CD8-positive, alpha-beta T cell (primary cell): ENCODE measurements at regions of chr5 and their contacts with region 1.

Region 1: DNA sequence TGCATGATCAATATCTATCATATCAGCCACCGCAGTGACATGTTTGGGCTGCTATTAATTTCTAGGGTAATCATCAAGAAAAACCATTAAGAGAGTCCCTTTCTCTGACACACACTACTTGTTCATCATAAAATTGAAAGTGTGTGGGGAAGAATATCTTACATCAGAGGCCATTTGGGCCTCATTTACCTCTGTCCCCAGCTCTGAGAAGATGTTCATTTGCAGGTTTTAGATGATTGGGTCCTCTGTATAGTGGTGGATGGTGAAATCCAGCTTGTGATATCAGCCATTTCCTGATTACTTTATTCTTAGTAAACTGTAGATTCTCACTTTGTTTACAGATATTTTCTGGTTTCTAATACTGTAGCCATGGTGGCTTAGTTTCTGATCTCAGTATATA is 29.8 kb upstream of the PJA2 start:
- DNase-seq: no peak
- ATAC-seq: no peak
- H3K4me3 ChIP-seq: no peak overlapping the region
- H3K4me3 Mint-ChIP-seq: no peak overlapping the region
- H3K27ac ChIP-seq: no peak overlapping the region
- H3K27ac Mint-ChIP-seq: no peak overlapping the region
- H3K4me1 ChIP-seq: no peaks in the 10 kb centered on the region
- H3K4me1 Mint-ChIP-seq: no peaks in the 10 kb centered on the region
- H3K27me3 ChIP-seq: no peaks in the 10 kb centered on the region
- H3K27me3 Mint-ChIP-seq: no peaks in the 10 kb centered on the region
- CTCF ChIP-seq: no peak

Region 2: GRCh38 chr5:108521841-108522506 is 917.6 kb before region 1 on chr5:
- CTCF ChIA-PET with region 1: no interaction called
- POLR2A ChIA-PET with region 1: no interaction called
- intact Hi-C with region 1: loop called in 1 of 2 experiments (anchors 2 kb)
- DNase-seq: peak in 3 of 9 experiments; percentile 7 to 50 (median 36)
- ATAC-seq: peak; percentile 66
- H3K4me3 ChIP-seq: no peak overlapping the region
- H3K4me3 Mint-ChIP-seq: no peak overlapping the region
- H3K27ac ChIP-seq: no peak overlapping the region
- H3K27ac Mint-ChIP-seq: no peak overlapping the region
- H3K4me1 ChIP-seq: no peaks in the 10 kb centered on the region
- H3K4me1 Mint-ChIP-seq: no peaks in the 10 kb centered on the region
- H3K27me3 ChIP-seq: no peaks in the 10 kb centered on the region
- H3K27me3 Mint-ChIP-seq: peaks cover 11% of the 10 kb centered on the region
- CTCF ChIP-seq: peak; percentile 63

Region 3: DNA sequence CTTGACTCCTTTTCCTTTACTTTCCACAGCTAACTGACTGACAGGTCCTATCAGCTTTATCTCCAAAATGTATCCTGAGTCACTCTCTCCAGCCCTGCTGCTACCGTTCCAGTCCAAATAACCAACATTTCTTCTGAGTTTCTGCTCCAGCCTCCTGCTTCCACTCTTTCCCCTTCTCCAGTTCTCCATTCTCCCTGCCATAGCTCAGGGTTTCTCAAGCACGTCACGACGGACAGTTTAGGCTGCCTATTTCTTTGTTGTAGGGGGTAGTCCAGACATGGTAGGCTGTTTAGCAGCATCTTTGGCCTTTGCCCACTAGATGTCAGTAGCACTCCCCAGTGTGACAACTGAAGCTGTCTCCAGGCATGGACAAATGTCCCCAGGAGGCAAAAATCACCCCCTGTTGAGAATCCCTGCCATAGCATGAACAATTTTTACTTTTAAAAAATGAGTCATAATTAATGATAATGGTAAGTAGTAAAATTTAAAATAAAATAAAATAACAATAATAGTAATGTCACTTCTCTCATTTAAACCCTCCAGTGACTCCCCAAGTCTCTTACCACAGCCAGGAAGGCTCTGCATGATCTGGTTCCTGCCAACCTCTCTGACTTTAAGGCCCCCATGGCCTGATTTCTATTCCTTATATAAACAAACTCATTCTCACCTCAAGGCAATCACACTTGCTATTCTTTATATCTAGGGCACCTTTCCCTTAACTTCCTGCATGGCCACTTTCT is 797.3 kb before region 1 on chr5:
- CTCF ChIA-PET with region 1: interaction called, 3 read pairs
- POLR2A ChIA-PET with region 1: no interaction called
- intact Hi-C with region 1: loop called (anchors 1 to 2 kb)
- DNase-seq: peak; percentile 12 to 66 (median 48)
- ATAC-seq: peak; percentile 71
- H3K4me3 ChIP-seq: no peak overlapping the region
- H3K4me3 Mint-ChIP-seq: no peak overlapping the region
- H3K27ac ChIP-seq: no peak overlapping the region
- H3K27ac Mint-ChIP-seq: no peak overlapping the region
- H3K4me1 ChIP-seq: no peaks in the 10 kb centered on the region
- H3K4me1 Mint-ChIP-seq: peaks cover 4% of the 10 kb centered on the region
- H3K27me3 ChIP-seq: no peaks in the 10 kb centered on the region
- H3K27me3 Mint-ChIP-seq: peaks cover 9% of the 10 kb centered on the region
- CTCF ChIP-seq: peak; percentile 78

Region 4: GRCh38 chr5:108681079-108681921 is 758.3 kb before region 1 on chr5:
- CTCF ChIA-PET with region 1: no interaction called
- POLR2A ChIA-PET with region 1: no interaction called
- intact Hi-C with region 1: loop called (anchors 1 to 2 kb)
- DNase-seq: peak in 3 of 9 experiments; percentile 20 to 69 (median 60)
- ATAC-seq: peak; percentile 73
- H3K4me3 ChIP-seq: no peak overlapping the region
- H3K4me3 Mint-ChIP-seq: no peak overlapping the region
- H3K27ac ChIP-seq: no peak overlapping the region
- H3K27ac Mint-ChIP-seq: no peak overlapping the region
- H3K4me1 ChIP-seq: no peaks in the 10 kb centered on the region
- H3K4me1 Mint-ChIP-seq: no peaks in the 10 kb centered on the region
- H3K27me3 ChIP-seq: no peaks in the 10 kb centered on the region
- H3K27me3 Mint-ChIP-seq: peaks cover 3% of the 10 kb centered on the region
- CTCF ChIP-seq: peak; percentile 68

Region 5: DNA sequence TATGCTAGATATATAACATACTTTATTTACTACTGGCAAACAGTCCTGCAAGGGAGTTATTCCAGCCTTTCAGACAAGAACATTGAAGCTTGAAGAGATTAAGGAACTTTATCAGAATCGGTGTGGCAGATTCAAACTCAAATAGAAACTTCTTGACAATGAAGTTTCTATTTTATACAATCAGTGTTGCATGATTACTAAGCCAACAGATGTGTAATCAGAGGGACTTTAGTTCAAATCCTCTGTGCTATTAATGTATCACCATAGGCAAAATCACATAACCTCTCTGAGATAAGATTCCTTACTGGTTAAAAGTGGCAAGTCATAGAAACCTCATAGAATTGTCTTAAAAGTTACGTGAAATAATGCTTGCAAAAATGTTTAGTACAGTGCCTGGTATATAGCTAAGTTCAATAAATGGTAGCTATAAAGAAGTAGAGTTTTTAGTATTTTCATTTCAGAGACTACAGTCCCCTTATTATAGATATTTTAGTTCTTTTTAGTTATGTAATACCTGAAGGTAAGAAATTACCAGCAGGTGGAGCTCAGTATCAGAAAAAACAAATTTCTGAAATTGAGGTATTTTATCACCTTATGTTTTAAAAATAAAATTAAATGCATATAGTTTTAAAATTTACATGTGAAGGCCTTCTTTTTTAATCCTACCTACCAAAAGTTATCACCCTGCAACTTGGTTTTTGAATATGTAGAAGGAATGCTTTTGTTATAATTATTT is 519.8 kb before region 1 on chr5:
- CTCF ChIA-PET with region 1: no interaction called
- POLR2A ChIA-PET with region 1: no interaction called
- intact Hi-C with region 1: loop called (anchors 2 to 5 kb)
- DNase-seq: peak in 2 of 9 experiments; percentile 3 to 11
- ATAC-seq: no peak
- H3K4me3 ChIP-seq: no peak overlapping the region
- H3K4me3 Mint-ChIP-seq: no peak overlapping the region
- H3K27ac ChIP-seq: no peak overlapping the region
- H3K27ac Mint-ChIP-seq: no peak overlapping the region
- H3K4me1 ChIP-seq: no peaks in the 10 kb centered on the region
- H3K4me1 Mint-ChIP-seq: peaks cover 5% of the 10 kb centered on the region
- H3K27me3 ChIP-seq: no peaks in the 10 kb centered on the region
- H3K27me3 Mint-ChIP-seq: no peaks in the 10 kb centered on the region
- CTCF ChIP-seq: no peak

Region 6: GRCh38 chr5:109335114-109335513 is 104.5 kb before region 1 on chr5:
- CTCF ChIA-PET with region 1: no interaction called
- POLR2A ChIA-PET with region 1: no interaction called
- intact Hi-C with region 1: no loop called
- DNase-seq: no peak
- ATAC-seq: no peak
- H3K4me3 ChIP-seq: no peak overlapping the region
- H3K4me3 Mint-ChIP-seq: no peak overlapping the region
- H3K27ac ChIP-seq: no peak overlapping the region
- H3K27ac Mint-ChIP-seq: no peak overlapping the region
- H3K4me1 ChIP-seq: no peaks in the 10 kb centered on the region
- H3K4me1 Mint-ChIP-seq: no peaks in the 10 kb centered on the region
- H3K27me3 ChIP-seq: no peaks in the 10 kb centered on the region
- H3K27me3 Mint-ChIP-seq: no peaks in the 10 kb centered on the region
- CTCF ChIP-seq: no peak

Region 7: GRCh38 chr5:109347252-109347888 is 92.2 kb before region 1 on chr5:
- CTCF ChIA-PET with region 1: interaction called, 3 read pairs
- POLR2A ChIA-PET with region 1: no interaction called
- intact Hi-C with region 1: loop called in 1 of 2 experiments (anchors 5 kb)
- DNase-seq: peak in 1 of 9 experiments; percentile 14
- ATAC-seq: peak; percentile 14
- H3K4me3 ChIP-seq: no peak overlapping the region
- H3K4me3 Mint-ChIP-seq: no peak overlapping the region
- H3K27ac ChIP-seq: peak overlapping the region in 1 of 2 experiments; percentile 24
- H3K27ac Mint-ChIP-seq: peak overlapping the region; percentile 70
- H3K4me1 ChIP-seq: no peaks in the 10 kb centered on the region
- H3K4me1 Mint-ChIP-seq: peaks cover 26% of the 10 kb centered on the region
- H3K27me3 ChIP-seq: no peaks in the 10 kb centered on the region
- H3K27me3 Mint-ChIP-seq: no peaks in the 10 kb centered on the region
- CTCF ChIP-seq: no peak

Region 8: GRCh38 chr5:109374625-109375024 is 65.0 kb before region 1 on chr5:
- CTCF ChIA-PET with region 1: no interaction called
- POLR2A ChIA-PET with region 1: no interaction called
- intact Hi-C with region 1: loop called (anchors 1 to 2 kb)
- DNase-seq: peak in 2 of 9 experiments; percentile 26 to 46
- ATAC-seq: peak; percentile 44
- H3K4me3 ChIP-seq: no peak overlapping the region
- H3K4me3 Mint-ChIP-seq: no peak overlapping the region
- H3K27ac ChIP-seq: no peak overlapping the region
- H3K27ac Mint-ChIP-seq: no peak overlapping the region
- H3K4me1 ChIP-seq: peaks cover 6% of the 10 kb centered on the region
- H3K4me1 Mint-ChIP-seq: peaks cover 69% of the 10 kb centered on the region
- H3K27me3 ChIP-seq: no peaks in the 10 kb centered on the region
- H3K27me3 Mint-ChIP-seq: no peaks in the 10 kb centered on the region
- CTCF ChIP-seq: no peak